B cell (primary cell): ENCODE measurements at regions of chr18 and their contacts with region 1.

Region 1: DNA sequence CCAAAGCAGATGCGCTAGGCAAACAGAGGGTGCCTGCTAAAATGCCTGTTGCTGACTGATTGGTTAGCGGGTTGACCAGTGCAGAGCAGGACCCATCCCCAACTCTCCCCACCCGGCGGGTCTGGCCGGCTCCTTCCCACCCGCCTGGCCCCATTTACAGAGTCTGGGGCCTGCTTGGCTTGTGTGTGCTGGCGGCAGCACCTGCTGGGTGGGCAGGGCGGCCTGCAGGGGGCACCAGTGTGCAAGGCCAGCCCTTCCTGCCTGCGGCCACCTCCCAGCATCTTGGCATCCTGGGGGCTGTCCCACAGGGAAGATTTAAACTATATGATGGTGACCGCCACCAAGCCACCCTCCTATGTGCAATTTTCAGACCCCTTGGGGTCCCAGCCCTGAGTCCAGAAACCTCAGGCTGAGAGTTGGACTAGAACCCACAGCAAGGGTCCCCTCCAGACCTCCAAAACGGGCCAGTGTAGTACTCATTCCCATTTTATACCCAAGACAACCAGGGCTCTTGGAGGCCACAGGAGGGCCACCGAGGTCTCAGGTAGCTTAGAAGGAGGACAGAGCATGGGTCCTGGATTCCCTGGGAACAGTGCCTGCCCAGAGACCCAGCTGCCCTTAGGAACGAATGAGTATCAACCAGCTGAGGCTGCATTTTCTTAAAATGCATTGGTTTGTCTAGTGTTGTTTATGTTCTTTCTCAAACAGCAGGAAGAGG is 173.6 kb downstream of the SMAD7 start:
- DNase-seq: peak; percentile 70
- ATAC-seq: peak; percentile 79
- H3K4me3 ChIP-seq: no peak overlapping the region
- H3K4me3 Mint-ChIP-seq: no peak overlapping the region
- H3K27ac ChIP-seq: no peak overlapping the region
- H3K27ac Mint-ChIP-seq: no peak overlapping the region
- H3K4me1 ChIP-seq: peaks cover 16 to 32% of the 10 kb centered on the region in 2 donors
- H3K4me1 Mint-ChIP-seq: peaks cover 27% of the 10 kb centered on the region
- H3K27me3 ChIP-seq: no peaks in the 10 kb centered on the region
- H3K27me3 Mint-ChIP-seq: no peaks in the 10 kb centered on the region
- CTCF ChIP-seq: peak; percentile 93

Region 2: DNA sequence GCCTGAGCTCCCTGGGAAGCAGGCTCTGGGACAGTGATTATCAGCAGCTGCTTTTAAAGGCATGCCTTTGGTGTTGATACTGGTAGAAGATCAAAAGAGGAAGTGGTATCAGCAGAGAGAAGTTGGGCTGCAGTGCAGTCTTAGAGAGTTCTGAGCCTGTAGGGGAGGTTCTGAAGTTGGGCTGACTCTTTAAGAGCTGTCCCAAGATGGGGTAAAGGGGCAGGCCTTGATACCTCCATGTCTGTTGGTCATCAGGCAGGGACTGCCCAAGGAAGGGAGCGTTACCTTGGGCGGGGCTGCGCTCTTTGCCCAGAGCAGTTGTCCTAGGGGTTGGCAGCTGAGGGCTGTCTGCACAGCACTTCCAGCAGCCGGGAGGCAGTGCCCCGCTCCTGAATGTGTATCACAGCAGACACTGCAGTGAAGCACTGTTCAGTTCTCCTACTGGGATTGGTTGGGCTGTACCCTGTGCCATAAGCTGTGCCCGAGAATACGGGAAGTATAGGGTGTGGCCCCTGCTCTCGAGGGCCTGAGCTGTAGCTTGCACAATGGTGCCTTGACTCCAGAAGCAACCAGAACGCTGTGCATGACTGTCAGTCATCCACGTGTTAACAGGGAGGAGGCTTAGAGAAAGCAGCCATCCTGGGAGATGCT is 61.3 kb before region 1 on chr18:
- CTCF ChIA-PET with region 1: no interaction called
- POLR2A ChIA-PET with region 1: no interaction called
- intact Hi-C with region 1: no loop called
- DNase-seq: peak; percentile 41
- ATAC-seq: peak; percentile 73
- H3K4me3 ChIP-seq: no peak overlapping the region
- H3K4me3 Mint-ChIP-seq: no peak overlapping the region
- H3K27ac ChIP-seq: no peak overlapping the region
- H3K27ac Mint-ChIP-seq: no peak overlapping the region
- H3K4me1 ChIP-seq: peaks cover 6 to 10% of the 10 kb centered on the region in 2 donors
- H3K4me1 Mint-ChIP-seq: peaks cover 9% of the 10 kb centered on the region
- H3K27me3 ChIP-seq: no peaks in the 10 kb centered on the region
- H3K27me3 Mint-ChIP-seq: no peaks in the 10 kb centered on the region
- CTCF ChIP-seq: no peak

Region 3: DNA sequence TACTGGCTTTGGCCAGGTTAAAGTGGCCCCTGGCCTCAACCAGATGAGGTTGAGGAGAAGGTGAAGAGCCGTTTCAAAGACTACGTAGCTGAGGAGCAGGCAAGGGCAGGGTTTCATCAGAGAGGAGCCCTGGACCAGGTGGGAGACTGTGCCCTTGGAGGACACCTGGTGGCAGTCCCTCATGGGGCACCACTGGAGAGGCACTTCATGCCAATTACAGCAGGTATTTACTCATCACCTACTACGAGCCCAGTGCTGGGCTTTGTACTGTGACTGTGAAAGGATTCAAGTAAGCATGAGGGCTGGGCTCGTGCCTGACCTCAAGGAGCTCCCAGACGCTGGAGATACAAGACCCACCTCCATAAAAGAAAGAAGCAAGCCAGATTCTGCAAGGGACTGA is 136.0 kb after region 1 on chr18:
- CTCF ChIA-PET with region 1: interaction called, 10 read pairs
- POLR2A ChIA-PET with region 1: no interaction called
- intact Hi-C with region 1: loop called (anchors 2 kb)
- DNase-seq: peak; percentile 37
- ATAC-seq: peak; percentile 63
- H3K4me3 ChIP-seq: no peak overlapping the region
- H3K4me3 Mint-ChIP-seq: no peak overlapping the region
- H3K27ac ChIP-seq: no peak overlapping the region
- H3K27ac Mint-ChIP-seq: no peak overlapping the region
- H3K4me1 ChIP-seq: peaks cover 0 to 6% of the 10 kb centered on the region in 2 donors
- H3K4me1 Mint-ChIP-seq: peaks cover 8% of the 10 kb centered on the region
- H3K27me3 ChIP-seq: no peaks in the 10 kb centered on the region
- H3K27me3 Mint-ChIP-seq: no peaks in the 10 kb centered on the region
- CTCF ChIP-seq: peak; percentile 16

Region 4: DNA sequence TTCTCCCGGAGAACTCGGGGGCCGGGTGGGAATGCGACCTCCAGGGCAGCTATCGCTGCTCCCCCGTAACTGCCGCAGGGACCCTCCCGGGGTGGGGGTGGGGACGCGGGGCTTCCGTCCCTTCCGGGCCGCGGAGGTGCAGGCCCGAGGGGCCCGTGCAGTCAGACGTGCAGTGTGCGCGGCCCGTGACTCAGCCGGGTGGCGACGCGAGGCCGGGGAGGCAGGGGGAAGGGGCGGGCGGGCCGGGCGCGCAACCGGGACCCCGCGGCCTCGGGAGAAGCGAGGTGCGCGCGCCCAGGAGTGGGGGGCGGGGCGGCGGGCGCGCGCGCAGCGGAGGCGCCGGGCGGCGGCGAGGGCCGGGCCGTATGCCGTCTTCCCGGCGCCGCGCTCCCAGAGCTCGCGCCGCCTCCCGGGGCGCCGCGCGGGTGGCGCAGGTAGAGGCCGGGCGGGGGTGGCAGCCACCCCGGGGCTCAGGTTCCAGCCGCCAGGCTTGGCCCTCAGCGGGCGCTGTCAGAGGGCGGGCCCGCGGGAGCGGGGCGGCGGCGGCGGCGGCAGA is 198.5 kb after region 1 on chr18:
- CTCF ChIA-PET with region 1: interaction called, 5 read pairs
- POLR2A ChIA-PET with region 1: no interaction called
- intact Hi-C with region 1: loop called (anchors 5 kb)
- DNase-seq: peak; percentile 63
- ATAC-seq: peak; percentile 75
- H3K4me3 ChIP-seq: peak overlapping the region in 4 of 5 experiments; percentile 33 to 71 (median 54)
- H3K4me3 Mint-ChIP-seq: peak overlapping the region; percentile 86
- H3K27ac ChIP-seq: no peak overlapping the region
- H3K27ac Mint-ChIP-seq: no peak overlapping the region
- H3K4me1 ChIP-seq: peaks cover 14 to 16% of the 10 kb centered on the region in 2 donors
- H3K4me1 Mint-ChIP-seq: peaks cover 13% of the 10 kb centered on the region
- H3K27me3 ChIP-seq: peaks cover 0 to 36% (median 12%) of the 10 kb centered on the region in 4 experiments
- H3K27me3 Mint-ChIP-seq: peaks cover 29% of the 10 kb centered on the region
- CTCF ChIP-seq: no peak

Region 5: GRCh38 chr18:49041435-49042245 is 264.5 kb after region 1 on chr18:
- CTCF ChIA-PET with region 1: interaction called, 52 read pairs
- POLR2A ChIA-PET with region 1: no interaction called
- intact Hi-C with region 1: loop called (anchors 1 kb)
- DNase-seq: peak; percentile 54
- ATAC-seq: peak; percentile 49
- H3K4me3 ChIP-seq: no peak overlapping the region
- H3K4me3 Mint-ChIP-seq: no peak overlapping the region
- H3K27ac ChIP-seq: no peak overlapping the region
- H3K27ac Mint-ChIP-seq: no peak overlapping the region
- H3K4me1 ChIP-seq: no peaks in the 10 kb centered on the region
- H3K4me1 Mint-ChIP-seq: peaks cover 6% of the 10 kb centered on the region
- H3K27me3 ChIP-seq: no peaks in the 10 kb centered on the region
- H3K27me3 Mint-ChIP-seq: no peaks in the 10 kb centered on the region
- CTCF ChIP-seq: peak; percentile 57

Region 6: DNA sequence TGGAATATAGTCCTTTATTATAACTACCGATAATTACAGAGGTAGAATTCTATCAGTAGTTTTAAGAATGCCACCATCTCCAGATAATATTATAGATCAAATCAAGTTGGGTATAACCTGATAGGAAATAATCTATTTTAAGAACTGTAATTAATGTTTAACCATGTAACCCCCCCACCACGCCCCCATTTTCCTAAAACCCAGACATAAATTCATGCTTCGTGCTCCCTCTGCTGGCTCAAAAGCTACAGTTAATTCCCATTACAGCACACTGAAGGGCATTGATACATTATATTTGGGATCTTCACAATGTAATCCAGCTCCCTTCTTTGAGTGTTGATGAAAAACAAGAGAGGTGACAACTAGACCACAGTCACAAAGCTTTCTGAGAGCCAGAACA is 401.6 kb after region 1 on chr18:
- CTCF ChIA-PET with region 1: interaction called, 30 read pairs
- POLR2A ChIA-PET with region 1: no interaction called
- intact Hi-C with region 1: loop called (anchors 1 kb)
- DNase-seq: peak; percentile 40
- ATAC-seq: no peak
- H3K4me3 ChIP-seq: no peak overlapping the region
- H3K4me3 Mint-ChIP-seq: no peak overlapping the region
- H3K27ac ChIP-seq: no peak overlapping the region
- H3K27ac Mint-ChIP-seq: no peak overlapping the region
- H3K4me1 ChIP-seq: peaks cover 12 to 18% of the 10 kb centered on the region in 2 donors
- H3K4me1 Mint-ChIP-seq: peaks cover 29% of the 10 kb centered on the region
- H3K27me3 ChIP-seq: no peaks in the 10 kb centered on the region
- H3K27me3 Mint-ChIP-seq: no peaks in the 10 kb centered on the region
- CTCF ChIP-seq: peak; percentile 47

Region 7: GRCh38 chr18:49238433-49239042 is 461.4 kb after region 1 on chr18:
- CTCF ChIA-PET with region 1: interaction called, 3 read pairs
- POLR2A ChIA-PET with region 1: no interaction called
- intact Hi-C with region 1: loop called (anchors 1 kb)
- DNase-seq: peak; percentile 11
- ATAC-seq: no peak
- H3K4me3 ChIP-seq: no peak overlapping the region
- H3K4me3 Mint-ChIP-seq: no peak overlapping the region
- H3K27ac ChIP-seq: no peak overlapping the region
- H3K27ac Mint-ChIP-seq: no peak overlapping the region
- H3K4me1 ChIP-seq: no peaks in the 10 kb centered on the region
- H3K4me1 Mint-ChIP-seq: no peaks in the 10 kb centered on the region
- H3K27me3 ChIP-seq: no peaks in the 10 kb centered on the region
- H3K27me3 Mint-ChIP-seq: no peaks in the 10 kb centered on the region
- CTCF ChIP-seq: peak; percentile 34